ENCODE measurements at regions of chr5 and their contacts with region 1.

Region 1: DNA sequence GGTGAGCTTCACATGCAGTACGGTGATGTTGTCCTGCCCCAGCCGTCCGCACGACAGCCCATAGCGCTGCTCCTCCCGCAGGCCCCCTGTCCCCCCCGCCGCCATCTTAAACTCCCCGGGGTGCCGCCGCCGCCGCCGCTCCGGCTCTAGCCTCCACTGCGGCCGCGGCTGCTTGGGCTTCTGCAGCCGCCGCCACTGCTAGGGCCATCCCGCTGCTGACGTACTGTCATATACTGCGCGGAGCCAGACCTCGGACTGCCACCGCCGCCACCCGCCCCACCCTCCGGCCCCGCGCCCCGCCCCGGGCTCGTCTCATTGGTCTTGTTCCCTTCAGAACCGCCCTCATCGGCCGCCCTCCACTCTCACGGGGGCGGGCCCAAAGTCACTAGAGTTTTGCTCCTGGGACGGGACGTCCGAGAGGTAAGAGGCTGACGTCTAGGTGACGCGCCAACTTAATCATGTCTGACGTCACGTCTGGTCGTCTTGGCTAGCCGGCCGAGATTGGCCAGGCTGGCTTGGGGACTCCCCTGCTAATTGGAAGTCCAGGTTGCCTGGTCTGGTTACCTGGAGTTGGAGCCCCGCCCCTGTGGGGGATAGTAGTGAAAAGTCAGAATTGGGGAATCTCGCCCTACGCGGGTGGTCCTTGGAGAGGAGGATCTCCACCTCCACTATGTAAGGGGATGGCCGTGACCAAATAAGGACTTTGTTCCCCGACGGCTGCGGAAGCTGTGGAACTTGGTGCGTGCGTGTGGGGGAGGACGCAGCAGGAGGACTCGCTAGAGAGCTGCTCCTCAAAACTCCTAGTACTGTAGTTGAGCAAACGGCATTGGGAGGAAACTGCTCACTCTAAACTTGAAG is at the start of gene ELL2:
- DNase-seq: peak; percentile 81 to 99 (median 94)
- ATAC-seq: peak; percentile 87
- H3K4me3 ChIP-seq: peak within 1 kb of the TSS; percentile 66
- H3K4me3 Mint-ChIP-seq: peak within 1 kb of the TSS; percentile 96
- H3K27ac ChIP-seq: peak within 1 kb of the TSS; percentile 70 to 72
- H3K27ac Mint-ChIP-seq: peak within 1 kb of the TSS; percentile 95
- H3K4me1 ChIP-seq: peaks cover 33% of the 10 kb centered on the region
- H3K4me1 Mint-ChIP-seq: peaks cover 40% of the 10 kb centered on the region
- H3K27me3 ChIP-seq: no peaks in the 10 kb centered on the region
- H3K27me3 Mint-ChIP-seq: no peaks in the 10 kb centered on the region
- CTCF ChIP-seq: no peak
- total RNA-seq, gene ELL2: 93.5 to 98.1 TPM

Region 2: DNA sequence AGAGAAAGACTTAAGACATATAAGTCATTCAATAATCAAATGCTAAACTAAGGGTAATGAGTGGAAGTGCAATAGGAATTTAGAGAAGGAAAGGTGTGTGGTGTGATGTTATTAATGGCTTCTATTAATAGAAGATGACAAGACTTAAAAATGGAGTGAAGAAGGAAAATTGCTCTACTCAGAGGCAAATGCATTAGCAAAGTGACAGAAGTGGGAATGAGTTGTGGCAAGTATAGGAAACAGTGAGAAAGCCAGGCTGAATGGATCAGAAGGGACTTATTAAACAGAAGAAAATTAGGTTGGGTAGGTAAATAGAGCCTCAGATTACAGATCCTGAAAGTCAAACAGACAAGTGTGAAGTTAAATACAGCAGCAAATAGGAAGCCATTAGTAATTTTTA is 412.8 kb before region 1 on chr5:
- CTCF ChIA-PET with region 1: no interaction called
- POLR2A ChIA-PET with region 1: no interaction called
- intact Hi-C with region 1: loop called (anchors 5 to 10 kb)
- DNase-seq: no peak
- ATAC-seq: no peak
- H3K4me3 ChIP-seq: no peak overlapping the region
- H3K4me3 Mint-ChIP-seq: peak overlapping the region; percentile 1
- H3K27ac ChIP-seq: no peak overlapping the region
- H3K27ac Mint-ChIP-seq: no peak overlapping the region
- H3K4me1 ChIP-seq: peaks cover 9% of the 10 kb centered on the region
- H3K4me1 Mint-ChIP-seq: peaks cover 40% of the 10 kb centered on the region
- H3K27me3 ChIP-seq: no peaks in the 10 kb centered on the region
- H3K27me3 Mint-ChIP-seq: no peaks in the 10 kb centered on the region
- CTCF ChIP-seq: no peak

Region 3: DNA sequence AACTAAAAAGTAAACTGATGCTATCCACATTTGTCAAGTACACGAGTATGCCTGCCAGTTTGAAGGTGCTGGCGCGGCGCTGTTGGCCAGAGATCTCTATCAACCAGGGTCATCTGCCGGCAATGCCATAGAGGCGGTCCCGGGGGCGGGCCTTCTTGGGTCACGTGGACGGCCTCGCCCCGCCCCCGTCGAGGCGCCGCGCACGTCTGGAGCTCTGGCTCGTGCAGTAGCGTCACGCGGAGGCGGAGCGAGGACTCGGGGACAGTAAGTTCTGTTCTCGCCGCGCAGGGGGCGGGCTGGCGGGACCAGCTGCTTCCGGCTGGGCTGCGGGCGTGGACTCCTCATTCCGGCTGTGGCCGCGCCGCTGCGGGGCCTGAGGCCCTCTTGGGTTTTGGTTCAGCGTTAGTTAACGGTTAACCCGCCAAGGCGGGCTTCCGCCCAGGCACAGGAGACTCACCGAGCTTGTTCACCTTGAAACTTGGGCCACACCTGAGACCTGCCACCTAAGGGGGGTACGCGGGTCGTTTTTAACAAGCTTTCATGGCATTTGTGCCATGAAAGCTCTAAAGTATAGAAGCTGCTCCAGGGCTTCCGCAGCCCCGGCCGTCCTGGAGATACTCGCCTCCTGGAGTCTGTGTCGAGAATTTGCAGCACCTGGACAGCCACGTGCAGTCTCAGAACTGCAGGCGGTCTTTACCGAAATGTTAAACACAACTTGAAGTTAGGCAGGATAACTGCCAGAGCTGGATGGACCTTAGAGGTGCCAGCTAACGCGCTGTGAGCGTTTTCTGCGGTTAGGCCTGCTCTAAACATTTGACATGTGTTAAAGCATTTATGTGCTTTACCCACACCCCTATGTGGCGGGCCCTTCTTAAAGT is 315.1 kb before region 1 on chr5 and contains the start of gene RFESD:
- CTCF ChIA-PET with region 1: no interaction called
- POLR2A ChIA-PET with region 1: interaction called, 7 read pairs
- intact Hi-C with region 1: loop called in 1 of 2 experiments (anchors 5 kb)
- DNase-seq: peak; percentile 82 to 97 (median 90)
- ATAC-seq: peak; percentile 92
- H3K4me3 ChIP-seq: peak within 1 kb of the TSS; percentile 74
- H3K4me3 Mint-ChIP-seq: peak within 1 kb of the TSS; percentile 88
- H3K27ac ChIP-seq: peak within 1 kb of the TSS; percentile 71 to 74
- H3K27ac Mint-ChIP-seq: peak within 1 kb of the TSS; percentile 68
- H3K4me1 ChIP-seq: peaks cover 18% of the 10 kb centered on the region
- H3K4me1 Mint-ChIP-seq: peaks cover 51% of the 10 kb centered on the region
- H3K27me3 ChIP-seq: no peaks in the 10 kb centered on the region
- H3K27me3 Mint-ChIP-seq: no peaks in the 10 kb centered on the region
- CTCF ChIP-seq: no peak
- total RNA-seq, gene RFESD: 1.3 to 1.5 TPM

Region 4: GRCh38 chr5:95870105-95870672 is 91.7 kb before region 1 on chr5:
- CTCF ChIA-PET with region 1: interaction called, 4 read pairs
- POLR2A ChIA-PET with region 1: interaction called, 18 read pairs
- intact Hi-C with region 1: loop called (anchors 1 to 5 kb)
- DNase-seq: peak in 3 of 14 experiments; percentile 31 to 42 (median 37)
- ATAC-seq: peak; percentile 15
- H3K4me3 ChIP-seq: no peak overlapping the region
- H3K4me3 Mint-ChIP-seq: peak overlapping the region; percentile 1
- H3K27ac ChIP-seq: no peak overlapping the region
- H3K27ac Mint-ChIP-seq: no peak overlapping the region
- H3K4me1 ChIP-seq: peaks cover 26% of the 10 kb centered on the region
- H3K4me1 Mint-ChIP-seq: peaks cover 41% of the 10 kb centered on the region
- H3K27me3 ChIP-seq: no peaks in the 10 kb centered on the region
- H3K27me3 Mint-ChIP-seq: no peaks in the 10 kb centered on the region
- CTCF ChIP-seq: no peak

Region 5: GRCh38 chr5:96125231-96125891 is 163.5 kb after region 1 on chr5:
- CTCF ChIA-PET with region 1: no interaction called
- POLR2A ChIA-PET with region 1: no interaction called
- intact Hi-C with region 1: no loop called
- DNase-seq: no peak
- ATAC-seq: no peak
- H3K4me3 ChIP-seq: no peak overlapping the region
- H3K4me3 Mint-ChIP-seq: no peak overlapping the region
- H3K27ac ChIP-seq: no peak overlapping the region
- H3K27ac Mint-ChIP-seq: no peak overlapping the region
- H3K4me1 ChIP-seq: no peaks in the 10 kb centered on the region
- H3K4me1 Mint-ChIP-seq: no peaks in the 10 kb centered on the region
- H3K27me3 ChIP-seq: no peaks in the 10 kb centered on the region
- H3K27me3 Mint-ChIP-seq: peaks cover 37% of the 10 kb centered on the region
- CTCF ChIP-seq: no peak

Region 6: GRCh38 chr5:96336351-96336985 is 374.6 kb after region 1 on chr5:
- CTCF ChIA-PET with region 1: no interaction called
- POLR2A ChIA-PET with region 1: no interaction called
- intact Hi-C with region 1: loop called in 1 of 2 experiments (anchors 5 kb)
- DNase-seq: peak in 13 of 14 experiments; percentile 16 to 83 (median 48)
- ATAC-seq: peak; percentile 95
- H3K4me3 ChIP-seq: no peak overlapping the region
- H3K4me3 Mint-ChIP-seq: no peak overlapping the region
- H3K27ac ChIP-seq: no peak overlapping the region
- H3K27ac Mint-ChIP-seq: no peak overlapping the region
- H3K4me1 ChIP-seq: no peaks in the 10 kb centered on the region
- H3K4me1 Mint-ChIP-seq: no peaks in the 10 kb centered on the region
- H3K27me3 ChIP-seq: no peaks in the 10 kb centered on the region
- H3K27me3 Mint-ChIP-seq: peaks cover 19% of the 10 kb centered on the region
- CTCF ChIP-seq: peak; percentile 81

Region 7: GRCh38 chr5:97183100-97183929 is 1221.5 kb after region 1 on chr5 and contains the start of gene RIOK2:
- CTCF ChIA-PET with region 1: no interaction called
- POLR2A ChIA-PET with region 1: no interaction called
- intact Hi-C with region 1: loop called (anchors 5 kb)
- DNase-seq: peak; percentile 81 to 96 (median 90)
- ATAC-seq: peak; percentile 91
- H3K4me3 ChIP-seq: peak within 1 kb of the TSS; percentile 73
- H3K4me3 Mint-ChIP-seq: peak within 1 kb of the TSS; percentile 97
- H3K27ac ChIP-seq: peak within 1 kb of the TSS; percentile 90 to 96
- H3K27ac Mint-ChIP-seq: peak within 1 kb of the TSS; percentile 98
- H3K4me1 ChIP-seq: peaks cover 11% of the 10 kb centered on the region
- H3K4me1 Mint-ChIP-seq: peaks cover 44% of the 10 kb centered on the region
- H3K27me3 ChIP-seq: no peaks in the 10 kb centered on the region
- H3K27me3 Mint-ChIP-seq: no peaks in the 10 kb centered on the region
- CTCF ChIP-seq: no peak
- total RNA-seq, gene RIOK2: 25.1 to 26.0 TPM